GM12878 (cell line): ENCODE measurements at regions of chr6 and their contacts with region 1.

Region 1: DNA sequence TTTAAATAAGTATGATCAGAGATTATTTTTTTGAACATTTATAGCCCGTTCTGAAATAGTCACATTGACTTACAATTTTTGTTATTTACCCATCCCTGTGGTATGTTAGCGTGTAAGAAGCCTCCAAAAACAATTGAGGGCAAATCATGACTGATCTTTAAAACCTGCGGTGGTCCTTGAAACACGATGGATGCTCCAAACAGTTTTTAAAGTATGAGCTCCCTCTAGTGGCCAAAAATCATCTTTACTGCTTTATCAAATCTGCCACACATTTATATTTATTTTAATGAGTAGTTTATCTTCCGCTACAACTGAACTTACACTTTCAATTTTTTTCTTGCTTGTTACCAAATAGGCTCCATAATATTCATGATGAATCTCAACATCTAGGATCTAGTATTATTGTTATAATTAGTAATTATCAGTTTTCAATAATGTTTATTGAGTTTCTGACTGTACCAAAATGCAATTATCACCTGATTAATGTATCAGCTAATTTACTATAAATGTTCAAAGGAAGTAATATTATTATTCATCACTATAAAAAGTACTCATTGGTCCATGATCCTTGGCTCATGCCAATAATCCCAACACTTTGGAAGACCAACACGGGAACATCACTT is 52.2 kb downstream of the MARCKS start:
- DNase-seq: peak; percentile 7
- ATAC-seq: peak; percentile 84
- H3K4me3 ChIP-seq: no peak overlapping the region
- H3K27ac ChIP-seq: no peak overlapping the region
- H3K4me1 ChIP-seq: no peaks in the 10 kb centered on the region
- H3K27me3 ChIP-seq: no peaks in the 10 kb centered on the region
- CTCF ChIP-seq: peak; percentile 44 to 76 (median 50); a peak in 5 of 6 replicates
- EP300 ChIP-seq: no peak
- POLR2A ChIP-seq: no peak
- RAD21 ChIP-seq: peak; percentile 84

Region 2: GRCh38 chr6:112780498-112781096 is 1128.7 kb before region 1 on chr6:
- CTCF ChIA-PET with region 1: interaction called, 40 read pairs
- POLR2A ChIA-PET with region 1: no interaction called
- RAD21 ChIA-PET with region 1: interaction called, 12 read pairs
- SMC1A ChIA-PET with region 1: interaction called, 6 read pairs
- in situ Hi-C with region 1: no loop called
- intact Hi-C with region 1: loop called (anchors 1 kb)
- DNase-seq: peak; percentile 24
- ATAC-seq: peak; percentile 99
- H3K4me3 ChIP-seq: no peak overlapping the region
- H3K27ac ChIP-seq: no peak overlapping the region
- H3K4me1 ChIP-seq: no peaks in the 10 kb centered on the region
- H3K27me3 ChIP-seq: no peaks in the 10 kb centered on the region
- CTCF ChIP-seq: peak; percentile 67 to 82 (median 69)
- EP300 ChIP-seq: no peak
- POLR2A ChIP-seq: no peak
- RAD21 ChIP-seq: peak; percentile 95

Region 3: DNA sequence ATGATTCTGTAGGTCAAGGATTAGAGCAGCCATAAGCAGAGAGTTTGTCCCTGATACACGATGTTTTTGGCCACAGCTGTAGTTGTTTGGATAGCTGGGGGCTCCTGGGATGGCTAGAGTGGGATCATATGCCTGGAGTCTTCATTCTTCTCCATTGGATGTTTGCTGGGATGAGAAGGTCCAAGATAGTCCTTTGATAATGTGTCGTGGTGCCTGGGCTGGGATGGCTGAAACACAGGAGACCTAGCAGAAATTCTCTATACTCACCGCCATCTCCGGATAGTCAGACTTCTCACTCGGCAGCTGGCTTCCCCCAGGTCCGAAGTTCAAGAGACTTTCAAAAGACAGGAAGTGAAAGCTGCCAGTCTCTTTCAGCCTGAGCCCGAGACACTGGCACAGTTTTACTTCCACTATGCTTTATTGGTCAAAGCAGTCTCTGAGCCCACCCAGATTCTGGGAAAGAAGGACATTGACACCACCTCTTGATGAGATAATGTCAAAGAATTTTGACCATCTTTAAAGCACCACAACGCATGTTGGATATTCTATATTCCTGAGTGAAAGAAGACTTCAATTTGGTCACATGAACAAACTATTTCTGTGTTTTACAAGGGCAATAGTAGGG is 36.2 kb before region 1 on chr6:
- CTCF ChIA-PET with region 1: interaction called, 10 read pairs
- POLR2A ChIA-PET with region 1: no interaction called
- RAD21 ChIA-PET with region 1: interaction called, 3 read pairs
- SMC1A ChIA-PET with region 1: interaction called, 6 read pairs
- in situ Hi-C with region 1: no loop called
- intact Hi-C with region 1: no loop called
- DNase-seq: no peak
- ATAC-seq: peak; percentile 89
- H3K4me3 ChIP-seq: peak overlapping the region; percentile 65
- H3K27ac ChIP-seq: no peak overlapping the region; the same call in 1 of the 2 replicates
- H3K4me1 ChIP-seq: peaks cover 7% of the 10 kb centered on the region
- H3K27me3 ChIP-seq: no peaks in the 10 kb centered on the region
- CTCF ChIP-seq: peak in 1 of 3 experiments; percentile 17; a peak in 2 of 6 replicates
- EP300 ChIP-seq: peak; percentile 48 to 67; a peak in 2 of 4 replicates
- POLR2A ChIP-seq: no peak
- RAD21 ChIP-seq: 0 out of 2 replicates have a peak, but pooled peaks have one; percentile 21

Region 4: DNA sequence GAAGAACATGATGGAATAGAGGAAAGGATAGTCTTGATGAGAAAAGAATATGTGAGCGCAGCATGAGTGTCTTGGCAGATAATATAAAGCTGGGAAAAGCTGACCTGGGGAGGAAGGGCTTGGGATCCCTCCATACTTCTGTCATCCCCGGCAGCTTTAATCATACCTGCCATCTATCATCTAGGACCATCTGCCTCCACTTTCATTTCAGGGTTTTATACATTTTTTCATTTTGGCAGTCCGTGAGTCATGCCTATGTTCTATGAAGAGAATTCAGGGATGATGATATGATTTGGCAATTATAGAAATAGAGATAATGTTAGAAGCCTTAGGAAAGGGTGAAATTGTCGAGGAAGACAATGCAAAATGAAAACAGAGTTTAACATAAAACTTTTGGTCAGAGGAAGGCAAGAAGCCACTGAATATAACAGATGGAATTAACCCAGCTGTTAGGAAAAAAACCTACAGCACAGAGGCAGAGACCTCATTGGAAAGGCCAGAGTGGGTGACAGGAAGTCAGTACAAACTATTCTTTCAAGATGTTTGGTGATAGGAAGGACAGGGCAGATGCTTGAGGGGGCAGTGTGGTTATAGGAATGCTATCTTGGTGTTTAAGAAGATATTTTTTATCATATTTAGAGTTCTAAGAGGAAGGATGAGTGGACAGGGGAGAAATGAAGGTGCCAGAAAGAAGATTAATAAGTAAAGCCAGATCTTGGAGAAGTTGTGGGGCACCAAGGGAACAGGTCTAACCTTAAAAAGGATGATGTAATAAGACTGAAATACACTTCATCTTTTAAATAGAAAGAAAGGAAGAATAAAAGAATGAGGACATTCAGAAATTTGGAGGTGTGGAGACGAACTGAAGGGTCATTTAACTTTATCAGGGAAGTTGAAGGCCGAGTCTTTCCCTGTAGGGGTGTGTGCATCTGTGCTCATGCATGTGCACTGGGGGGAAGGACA is 14.4 kb before region 1 on chr6:
- CTCF ChIA-PET with region 1: interaction called, 11 read pairs
- POLR2A ChIA-PET with region 1: interaction called, 3 read pairs
- RAD21 ChIA-PET with region 1: no interaction called
- SMC1A ChIA-PET with region 1: interaction called, 14 read pairs
- in situ Hi-C with region 1: no loop called
- intact Hi-C with region 1: no loop called
- DNase-seq: no peak
- ATAC-seq: no peak
- H3K4me3 ChIP-seq: no peak overlapping the region
- H3K27ac ChIP-seq: no peak overlapping the region
- H3K4me1 ChIP-seq: no peaks in the 10 kb centered on the region
- H3K27me3 ChIP-seq: no peaks in the 10 kb centered on the region
- CTCF ChIP-seq: no peak
- EP300 ChIP-seq: no peak
- POLR2A ChIP-seq: no peak
- RAD21 ChIP-seq: no peak

Region 5: DNA sequence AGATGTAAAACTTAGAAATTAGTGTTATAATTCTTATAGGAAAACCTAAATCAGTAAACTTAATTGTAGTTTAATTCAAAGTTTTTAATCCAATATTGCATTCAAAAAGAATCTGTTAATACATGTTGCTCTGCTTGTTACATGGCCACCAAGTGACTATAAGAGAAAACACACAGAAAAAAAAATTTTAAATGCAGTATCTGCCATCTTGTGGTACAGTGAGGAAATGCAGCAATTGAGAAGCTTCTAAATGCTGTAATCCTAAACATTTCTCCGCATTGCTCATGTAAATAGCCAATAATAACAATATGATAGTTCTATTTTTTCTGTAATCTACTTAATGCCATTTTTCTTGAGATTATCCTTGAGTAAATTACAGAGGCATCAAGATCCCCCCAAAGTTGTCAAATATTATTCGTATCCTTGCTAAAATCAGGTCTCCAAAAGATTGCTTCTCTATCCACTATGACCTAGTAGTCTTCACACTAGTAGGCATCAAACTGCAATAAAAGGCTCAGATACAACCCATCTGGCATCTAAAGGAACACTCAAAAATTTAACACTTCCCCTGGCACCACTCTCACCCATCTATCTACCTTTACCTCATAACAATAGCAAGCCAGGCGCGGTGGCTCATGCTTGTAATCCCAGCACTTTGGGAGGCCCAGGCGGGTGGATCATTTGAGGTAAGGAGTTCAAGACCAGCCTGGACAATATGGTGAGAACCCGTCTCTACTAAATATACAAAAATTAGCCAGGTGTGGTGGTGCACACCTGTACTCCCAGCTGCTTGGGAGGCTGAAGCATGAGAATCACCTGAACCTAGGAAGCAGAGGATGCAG is 27.0 kb after region 1 on chr6:
- CTCF ChIA-PET with region 1: interaction called, 22 read pairs
- POLR2A ChIA-PET with region 1: no interaction called
- RAD21 ChIA-PET with region 1: no interaction called
- SMC1A ChIA-PET with region 1: interaction called, 3 read pairs
- in situ Hi-C with region 1: no loop called
- intact Hi-C with region 1: no loop called
- DNase-seq: peak; percentile 24
- ATAC-seq: peak; percentile 92
- H3K4me3 ChIP-seq: no peak overlapping the region
- H3K27ac ChIP-seq: no peak overlapping the region
- H3K4me1 ChIP-seq: no peaks in the 10 kb centered on the region
- H3K27me3 ChIP-seq: no peaks in the 10 kb centered on the region
- CTCF ChIP-seq: peak; percentile 59 to 77 (median 69)
- EP300 ChIP-seq: no peak
- POLR2A ChIP-seq: no peak
- RAD21 ChIP-seq: peak; percentile 57